Astrocyte of the cerebellum (primary cell): ENCODE measurements at regions of chr4 and their contacts with region 1.

Region 1: DNA sequence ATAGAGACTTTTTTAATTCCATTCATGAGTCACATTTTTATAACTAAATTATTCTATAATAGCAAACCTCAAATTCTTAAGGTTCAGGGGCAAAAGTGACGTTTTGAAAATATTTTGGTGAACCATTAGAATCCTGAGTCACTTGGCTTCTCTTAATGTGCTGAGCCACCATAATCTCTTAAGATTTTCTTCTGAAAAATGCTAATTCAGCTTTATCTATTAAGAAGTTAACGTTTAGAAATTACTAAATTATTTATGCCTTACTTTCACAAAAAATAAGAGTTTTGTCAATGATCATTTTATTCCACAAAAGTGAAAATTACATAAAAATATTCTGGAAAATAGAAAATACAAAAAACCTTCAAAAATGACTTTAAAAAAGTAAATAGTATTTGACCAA is 72.5 kb downstream of the GPM6A start:
- DNase-seq: no peak
- H3K4me3 ChIP-seq: no peak overlapping the region
- CTCF ChIP-seq: no peak

Region 2: GRCh38 chr4:175671491-175671934 is 68.1 kb before region 1 on chr4:
- in situ Hi-C with region 1: loop called (anchors 10 kb)
- DNase-seq: no peak
- H3K4me3 ChIP-seq: peak overlapping the region; percentile 30
- CTCF ChIP-seq: no peak

Region 3: DNA sequence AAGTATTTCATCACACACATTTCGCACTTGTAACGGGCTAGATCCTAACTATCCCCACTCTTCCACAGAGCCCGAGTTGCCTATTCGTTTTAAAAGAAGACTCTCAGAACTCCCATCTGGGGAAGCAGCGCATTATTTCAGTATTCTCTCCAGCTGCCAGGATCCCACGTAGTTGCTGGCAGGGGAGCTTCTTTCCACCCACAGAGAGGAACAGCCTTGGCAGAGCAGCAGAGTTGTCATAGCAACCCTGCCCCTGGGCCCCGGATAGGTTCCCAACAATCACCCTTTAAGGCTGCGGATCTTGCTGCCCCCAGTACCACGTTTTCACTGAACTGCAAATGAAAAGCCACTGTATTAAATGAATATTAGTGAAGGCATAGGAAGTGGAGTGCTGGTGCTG is 34.2 kb before region 1 on chr4:
- in situ Hi-C with region 1: no loop called
- DNase-seq: peak; percentile 60
- H3K4me3 ChIP-seq: no peak overlapping the region
- CTCF ChIP-seq: no peak